Caco-2 (cell line): ENCODE measurements at regions of chr11 and their contacts with region 1.

Region 1: DNA sequence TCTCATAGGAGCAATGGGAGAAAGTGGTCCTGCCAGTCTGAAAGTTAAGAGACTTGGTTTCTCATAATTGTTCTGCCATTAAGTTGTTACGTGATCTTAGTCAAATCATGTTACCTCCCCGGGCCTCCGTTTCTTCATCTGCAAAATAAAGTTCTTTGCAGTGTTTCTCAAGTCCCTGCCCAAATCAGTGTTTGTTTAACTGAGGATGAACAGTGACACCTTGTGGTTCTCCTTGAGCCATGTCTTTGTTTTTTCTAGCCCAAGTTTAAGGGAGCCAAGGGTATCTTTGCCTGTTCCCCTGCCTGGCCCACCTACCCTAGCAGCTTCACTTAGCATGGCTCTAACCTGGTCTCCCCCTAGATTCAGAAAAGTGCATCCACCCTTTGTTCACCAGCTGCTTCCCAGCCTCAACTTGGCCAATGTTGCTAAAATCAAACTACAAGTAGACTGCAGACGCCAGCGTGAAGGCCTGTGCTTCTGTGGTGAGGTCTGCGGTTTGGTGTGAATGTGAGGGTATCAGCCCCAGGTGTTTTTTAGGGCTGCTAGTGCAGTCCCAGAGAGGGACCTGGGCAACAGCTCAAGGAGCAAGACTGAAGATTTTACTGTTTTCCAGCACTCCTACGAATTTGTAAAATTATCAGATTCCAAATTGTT is 35.5 kb downstream of the FZD4 start:
- DNase-seq: peak; percentile 60 to 77
- H3K4me3 ChIP-seq: no peak overlapping the region
- H3K4me3 Mint-ChIP-seq: no peak overlapping the region
- H3K27ac Mint-ChIP-seq: no peak overlapping the region
- H3K4me1 ChIP-seq: peaks cover 32% of the 10 kb centered on the region
- H3K4me1 Mint-ChIP-seq: peaks cover 30% of the 10 kb centered on the region
- H3K27me3 ChIP-seq: no peaks in the 10 kb centered on the region
- H3K27me3 Mint-ChIP-seq: no peaks in the 10 kb centered on the region
- CTCF ChIP-seq: peak; percentile 91 to 95

Region 2: GRCh38 chr11:86443415-86443814 is 476.3 kb before region 1 on chr11:
- CTCF ChIA-PET with region 1: no interaction called
- POLR2A ChIA-PET with region 1: no interaction called
- intact Hi-C with region 1: no loop called
- DNase-seq: no peak
- H3K4me3 ChIP-seq: no peak overlapping the region
- H3K4me3 Mint-ChIP-seq: no peak overlapping the region
- H3K27ac Mint-ChIP-seq: no peak overlapping the region
- H3K4me1 ChIP-seq: no peaks in the 10 kb centered on the region
- H3K4me1 Mint-ChIP-seq: no peaks in the 10 kb centered on the region
- H3K27me3 ChIP-seq: no peaks in the 10 kb centered on the region
- H3K27me3 Mint-ChIP-seq: no peaks in the 10 kb centered on the region
- CTCF ChIP-seq: no peak

Region 3: GRCh38 chr11:86456052-86456939 is 463.4 kb before region 1 on chr11:
- CTCF ChIA-PET with region 1: no interaction called
- POLR2A ChIA-PET with region 1: no interaction called
- intact Hi-C with region 1: loop called (anchors 1 kb)
- DNase-seq: peak; percentile 91 to 93
- H3K4me3 ChIP-seq: no peak overlapping the region
- H3K4me3 Mint-ChIP-seq: no peak overlapping the region
- H3K27ac Mint-ChIP-seq: peak overlapping the region; percentile 65
- H3K4me1 ChIP-seq: peaks cover 29% of the 10 kb centered on the region
- H3K4me1 Mint-ChIP-seq: peaks cover 41% of the 10 kb centered on the region
- H3K27me3 ChIP-seq: no peaks in the 10 kb centered on the region
- H3K27me3 Mint-ChIP-seq: no peaks in the 10 kb centered on the region
- CTCF ChIP-seq: peak; percentile 98

Region 4: GRCh38 chr11:86869966-86870570 is 49.6 kb before region 1 on chr11:
- CTCF ChIA-PET with region 1: interaction called, 13 read pairs
- POLR2A ChIA-PET with region 1: no interaction called
- intact Hi-C with region 1: loop called (anchors 1 kb)
- DNase-seq: peak; percentile 72 to 76
- H3K4me3 ChIP-seq: no peak overlapping the region
- H3K4me3 Mint-ChIP-seq: no peak overlapping the region
- H3K27ac Mint-ChIP-seq: no peak overlapping the region
- H3K4me1 ChIP-seq: peaks cover 11% of the 10 kb centered on the region
- H3K4me1 Mint-ChIP-seq: peaks cover 13% of the 10 kb centered on the region
- H3K27me3 ChIP-seq: no peaks in the 10 kb centered on the region
- H3K27me3 Mint-ChIP-seq: no peaks in the 10 kb centered on the region
- CTCF ChIP-seq: peak; percentile 95 to 98

Region 5: GRCh38 chr11:86938900-86939880 is 19.5 kb after region 1 on chr11:
- CTCF ChIA-PET with region 1: interaction called, 9 read pairs
- POLR2A ChIA-PET with region 1: no interaction called
- intact Hi-C with region 1: loop called (anchors 2 kb)
- DNase-seq: peak in 1 of 2 experiments; percentile 75
- H3K4me3 ChIP-seq: no peak overlapping the region
- H3K4me3 Mint-ChIP-seq: peak overlapping the region; percentile 60
- H3K27ac Mint-ChIP-seq: peak overlapping the region; percentile 84
- H3K4me1 ChIP-seq: peaks cover 51% of the 10 kb centered on the region
- H3K4me1 Mint-ChIP-seq: peaks cover 52% of the 10 kb centered on the region
- H3K27me3 ChIP-seq: no peaks in the 10 kb centered on the region
- H3K27me3 Mint-ChIP-seq: no peaks in the 10 kb centered on the region
- CTCF ChIP-seq: peak; percentile 79 to 83